Left lung (tissue), 14 donors: ENCODE measurements at regions of chr2 and their contacts with region 1.

Region 1: GRCh38 chr2:64750817-64751285 is 97.1 kb upstream of the SERTAD2 start:
- DNase-seq: peak; percentile 98 to 100 (median 100)
- ATAC-seq: peak; percentile 88
- H3K4me3 ChIP-seq: peak overlapping the region; percentile 69
- H3K27ac ChIP-seq: peak overlapping the region; percentile 98
- H3K4me1 ChIP-seq: peaks cover 8 to 30% of the 10 kb centered on the region in 2 donors
- H3K27me3 ChIP-seq: no peaks in the 10 kb centered on the region
- CTCF ChIP-seq: no peak

Region 2: GRCh38 chr2:64653349-64654062 is 97.3 kb before region 1 on chr2 and contains the start of gene SERTAD2:
- intact Hi-C with region 1: loop called in 1 of 2 experiments (anchors 5 kb)
- DNase-seq: peak; percentile 85 to 99 (median 92)
- ATAC-seq: peak; percentile 85
- H3K4me3 ChIP-seq: peak within 1 kb of the TSS; percentile 77 to 86
- H3K27ac ChIP-seq: peak within 1 kb of the TSS; percentile 98 to 99
- H3K4me1 ChIP-seq: peaks cover 14 to 67% of the 10 kb centered on the region in 2 donors
- H3K27me3 ChIP-seq: no peaks in the 10 kb centered on the region
- CTCF ChIP-seq: no peak
- polyA plus RNA-seq, gene SERTAD2: 25.8 to 28.0 (median 26.7) TPM

Region 3: DNA sequence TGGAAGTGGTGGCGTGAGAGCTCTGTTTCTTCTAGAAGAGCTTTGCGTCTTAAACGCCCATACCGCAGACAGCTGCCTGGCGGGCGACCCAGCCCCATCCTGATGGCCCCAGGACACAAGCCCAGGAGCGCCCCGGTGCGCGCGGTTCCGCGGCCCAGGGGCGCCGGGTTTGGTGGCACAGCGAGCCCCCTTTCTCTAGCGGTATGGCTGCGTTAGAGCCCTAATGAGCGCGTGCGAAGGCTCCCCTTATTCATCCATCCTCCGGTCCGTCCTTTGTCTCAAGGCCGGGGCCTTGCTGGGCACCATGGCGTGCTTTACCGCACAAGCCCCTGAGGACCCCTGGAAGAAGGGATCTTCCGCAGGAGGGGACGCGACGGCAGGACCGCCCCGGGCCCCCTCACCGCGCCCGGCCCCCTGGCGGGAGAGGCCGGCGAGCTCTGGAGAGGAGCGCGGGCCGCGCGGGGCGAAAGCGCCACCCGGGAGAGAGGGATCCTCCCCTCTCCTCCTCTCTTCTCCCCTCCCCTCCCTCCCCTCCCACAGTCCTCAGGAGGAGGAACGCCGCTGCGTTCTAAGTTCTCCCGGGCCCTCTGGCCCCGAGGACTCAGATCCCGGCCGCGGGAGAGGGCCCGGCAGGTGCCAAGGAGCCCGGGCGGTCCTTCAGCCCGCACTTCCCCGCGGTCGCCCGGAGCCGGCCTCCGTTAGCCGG is 237.7 kb after region 1 on chr2:
- intact Hi-C with region 1: no loop called
- DNase-seq: peak; percentile 75 to 90 (median 84)
- ATAC-seq: peak; percentile 80
- H3K4me3 ChIP-seq: peak overlapping the region; percentile 61 to 71
- H3K27ac ChIP-seq: peak overlapping the region; percentile 94 to 95
- H3K4me1 ChIP-seq: peaks cover 5 to 48% of the 10 kb centered on the region in 2 donors
- H3K27me3 ChIP-seq: no peaks in the 10 kb centered on the region
- CTCF ChIP-seq: peak in 1 of 2 donors; percentile 35